ENCODE measurements at regions of chr18 and their contacts with region 1.

Region 1: GRCh38 chr18:56921896-56922480 is 224.9 kb upstream of the BOD1L2 start:
- DNase-seq: no peak
- H3K4me3 ChIP-seq: no peak overlapping the region
- H3K27ac ChIP-seq: no peak overlapping the region
- H3K27me3 ChIP-seq: no peaks in the 10 kb centered on the region
- CTCF ChIP-seq: no peak

Region 2: GRCh38 chr18:56982766-56983165 is 60.8 kb after region 1 on chr18:
- intact Hi-C with region 1: loop called in 1 of 2 experiments (anchors 10 kb)
- DNase-seq: no peak
- H3K4me3 ChIP-seq: peak overlapping the region in 1 of 59 donors; percentile 27
- H3K27ac ChIP-seq: peak overlapping the region in 35 of 59 donors; percentile 0 to 76 (median 28)
- H3K27me3 ChIP-seq: no peaks in the 10 kb centered on the region
- CTCF ChIP-seq: no peak